BJ (cell line): ENCODE measurements at regions of chr20 and their contacts with region 1.

Region 1: GRCh38 chr20:47379433-47380150 is 23.1 kb upstream of the ZMYND8 start:
- DNase-seq: no peak
- H3K4me3 ChIP-seq: no peak overlapping the region
- H3K27me3 ChIP-seq: no peaks in the 10 kb centered on the region
- CTCF ChIP-seq: no peak

Region 2: GRCh38 chr20:47063409-47064207 is 316.0 kb before region 1 on chr20:
- CTCF ChIA-PET with region 1: no interaction called
- POLR2A ChIA-PET with region 1: no interaction called
- DNase-seq: no peak
- H3K4me3 ChIP-seq: no peak overlapping the region
- H3K27me3 ChIP-seq: no peaks in the 10 kb centered on the region
- CTCF ChIP-seq: no peak

Region 3: DNA sequence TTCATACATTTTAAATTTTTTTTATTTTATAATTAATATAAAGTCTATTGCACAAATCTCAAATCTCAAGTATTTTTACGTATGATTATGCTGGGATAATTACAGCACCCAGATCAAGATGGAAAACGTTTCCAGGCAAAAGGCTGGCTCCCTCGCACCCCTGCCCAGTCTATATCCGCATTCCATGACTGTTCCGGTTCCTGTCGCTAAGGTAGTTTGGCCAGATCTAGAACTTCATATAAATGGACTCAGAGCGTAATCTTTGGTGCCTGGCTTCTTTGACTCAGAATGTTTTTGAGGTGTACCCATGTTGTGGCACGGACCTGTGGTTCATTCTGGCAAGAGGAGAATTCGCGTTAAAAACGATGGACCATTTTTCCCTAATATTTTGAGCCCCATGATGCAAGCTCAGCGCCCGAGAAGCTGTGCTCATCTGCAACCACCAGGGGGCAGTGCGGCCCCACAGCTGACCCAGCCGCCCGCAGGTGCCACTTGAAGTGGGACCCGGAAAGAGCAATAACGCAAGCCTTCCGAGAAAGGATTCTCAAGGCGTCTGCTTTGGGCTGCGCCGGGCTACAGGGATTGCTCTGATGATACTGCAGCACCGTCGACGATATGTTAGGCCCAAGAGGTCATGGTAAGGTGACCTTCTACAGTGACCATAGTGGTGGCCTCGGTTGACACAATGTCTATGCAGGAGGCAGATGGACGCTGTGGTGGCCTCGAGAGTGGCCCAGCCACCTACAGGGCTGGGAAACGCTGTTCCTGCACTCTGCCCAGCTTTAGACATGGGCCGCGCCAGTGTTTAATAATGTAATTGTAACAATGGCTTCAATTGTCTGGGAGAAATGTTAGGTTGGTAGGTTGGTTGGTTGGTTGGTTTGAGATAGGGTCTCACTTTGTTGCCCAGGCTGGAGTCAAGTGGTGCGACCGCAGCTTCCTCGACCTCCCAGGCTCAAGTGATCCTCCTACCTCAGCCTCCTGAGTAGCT is 183.2 kb before region 1 on chr20:
- CTCF ChIA-PET with region 1: interaction called, 75 read pairs
- POLR2A ChIA-PET with region 1: no interaction called
- DNase-seq: no peak
- H3K4me3 ChIP-seq: no peak overlapping the region
- H3K27me3 ChIP-seq: no peaks in the 10 kb centered on the region
- CTCF ChIP-seq: peak; percentile 97

Region 4: DNA sequence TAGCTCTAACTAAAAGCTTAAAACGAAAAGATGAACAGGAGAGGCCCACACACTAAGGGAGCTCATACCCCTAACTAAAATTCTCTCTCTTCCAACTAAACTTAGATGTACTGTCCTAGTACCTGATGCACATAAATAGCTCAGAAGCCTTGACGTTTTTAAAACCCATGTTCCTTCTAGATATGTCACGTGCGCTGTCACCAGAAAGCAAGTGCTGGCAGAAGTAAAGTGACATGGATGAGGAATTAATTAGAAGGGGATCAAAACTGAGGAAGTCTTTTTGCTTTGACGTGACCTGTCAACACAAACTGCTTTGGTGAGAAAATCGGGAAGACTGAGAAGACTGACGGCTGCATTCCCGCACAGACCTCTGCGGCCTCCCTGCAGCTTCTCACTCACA is 165.6 kb before region 1 on chr20:
- CTCF ChIA-PET with region 1: interaction called, 68 read pairs
- POLR2A ChIA-PET with region 1: no interaction called
- DNase-seq: no peak
- H3K4me3 ChIP-seq: no peak overlapping the region
- H3K27me3 ChIP-seq: no peaks in the 10 kb centered on the region
- CTCF ChIP-seq: no peak

Region 5: DNA sequence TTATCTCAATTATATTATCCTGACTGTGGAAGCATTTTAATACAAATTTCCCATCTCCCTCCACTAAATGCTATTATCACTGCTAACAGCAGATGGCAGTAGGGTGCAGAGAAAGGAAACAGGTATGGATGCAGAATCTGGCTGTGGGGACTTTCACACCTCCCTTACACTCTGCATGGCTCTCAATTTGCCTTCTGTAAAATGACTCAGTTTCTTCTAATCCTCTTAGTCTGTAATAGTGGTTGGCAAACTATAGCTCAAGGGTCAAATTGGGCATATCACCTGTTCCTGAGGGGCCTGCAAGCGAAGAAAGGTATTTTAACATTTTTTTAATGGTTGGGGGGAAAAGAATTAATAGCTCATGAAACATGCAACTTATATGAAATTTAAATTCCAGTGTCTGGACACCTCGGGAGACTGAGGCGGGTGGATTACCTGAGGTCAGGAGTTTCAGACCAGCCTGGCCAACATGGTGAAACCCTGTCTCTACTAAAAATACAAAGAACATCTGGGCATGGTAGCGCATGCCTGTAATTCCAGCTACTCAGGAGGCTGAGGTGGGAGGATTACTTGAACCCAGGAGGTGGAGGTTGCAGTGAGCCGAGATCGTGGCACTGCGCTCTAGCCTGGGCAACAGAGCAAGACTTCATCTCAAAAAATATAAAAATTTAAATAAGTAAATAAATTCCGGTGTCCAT is 106.5 kb before region 1 on chr20:
- CTCF ChIA-PET with region 1: interaction called, 321 read pairs
- POLR2A ChIA-PET with region 1: interaction called, 4 read pairs
- DNase-seq: no peak
- H3K4me3 ChIP-seq: no peak overlapping the region
- H3K27me3 ChIP-seq: no peaks in the 10 kb centered on the region
- CTCF ChIP-seq: peak; percentile 80

Region 6: GRCh38 chr20:47317127-47317895 is 62.3 kb before region 1 on chr20:
- CTCF ChIA-PET with region 1: interaction called, 10 read pairs
- POLR2A ChIA-PET with region 1: interaction called, 5 read pairs
- DNase-seq: peak; percentile 79
- H3K4me3 ChIP-seq: no peak overlapping the region
- H3K27me3 ChIP-seq: no peaks in the 10 kb centered on the region
- CTCF ChIP-seq: no peak

Region 7: GRCh38 chr20:47392015-47392720 is 12.6 kb after region 1 on chr20:
- CTCF ChIA-PET with region 1: interaction called, 12 read pairs
- POLR2A ChIA-PET with region 1: no interaction called
- DNase-seq: peak; percentile 95
- H3K4me3 ChIP-seq: no peak overlapping the region
- H3K27me3 ChIP-seq: no peaks in the 10 kb centered on the region
- CTCF ChIP-seq: no peak

Region 8: GRCh38 chr20:47418061-47418912 is 38.7 kb after region 1 on chr20:
- CTCF ChIA-PET with region 1: no interaction called
- POLR2A ChIA-PET with region 1: no interaction called
- DNase-seq: no peak
- H3K4me3 ChIP-seq: no peak overlapping the region
- H3K27me3 ChIP-seq: no peaks in the 10 kb centered on the region
- CTCF ChIP-seq: no peak

Region 9: GRCh38 chr20:47620808-47621805 is 241.5 kb after region 1 on chr20:
- CTCF ChIA-PET with region 1: interaction called, 16 read pairs
- POLR2A ChIA-PET with region 1: no interaction called
- DNase-seq: no peak
- H3K4me3 ChIP-seq: no peak overlapping the region
- H3K27me3 ChIP-seq: no peaks in the 10 kb centered on the region
- CTCF ChIP-seq: peak; percentile 73